ENCODE measurements at regions of chr12 and their contacts with region 1.

Region 1: DNA sequence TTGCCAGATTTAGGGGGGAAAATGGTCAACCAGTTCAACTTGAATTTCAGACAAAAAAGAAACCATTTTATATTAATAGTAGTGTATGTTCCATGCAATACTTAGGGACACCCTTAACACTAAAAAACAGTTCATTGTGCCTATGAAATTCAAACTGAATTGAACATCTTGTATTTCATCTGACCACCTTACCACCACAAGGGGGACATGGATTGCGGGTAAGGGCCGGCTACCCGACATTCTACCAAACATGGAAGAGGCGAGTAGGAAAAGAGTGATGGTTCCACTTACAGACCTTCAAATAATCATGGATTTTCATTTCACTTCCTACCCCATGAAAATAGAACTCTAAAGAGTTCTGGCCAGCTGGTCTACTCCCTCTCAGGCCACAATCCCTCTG is 10.3 kb upstream of the STK38L start:
- DNase-seq: no peak
- H3K4me3 ChIP-seq: no peak overlapping the region
- H3K27ac ChIP-seq: no peak overlapping the region
- H3K4me1 ChIP-seq: peaks cover 0 to 8% (median 0%) of the 10 kb centered on the region in 4 donors
- H3K27me3 ChIP-seq: no peaks in the 10 kb centered on the region
- CTCF ChIP-seq: no peak

Region 2: GRCh38 chr12:27083861-27084394 is 149.9 kb before region 1 on chr12:
- intact Hi-C with region 1: no loop called
- DNase-seq: peak in 1 of 2 donors; percentile 25
- H3K4me3 ChIP-seq: no peak overlapping the region
- H3K27ac ChIP-seq: peak overlapping the region in 1 of 2 donors; percentile 46
- H3K4me1 ChIP-seq: peaks cover 0 to 48% (median 14%) of the 10 kb centered on the region in 4 donors
- H3K27me3 ChIP-seq: no peaks in the 10 kb centered on the region
- CTCF ChIP-seq: no peak

Region 3: GRCh38 chr12:27207615-27208413 is 26.0 kb before region 1 on chr12:
- intact Hi-C with region 1: loop called (anchors 2 kb)
- DNase-seq: no peak
- H3K4me3 ChIP-seq: no peak overlapping the region
- H3K27ac ChIP-seq: no peak overlapping the region
- H3K4me1 ChIP-seq: no peaks in the 10 kb centered on the region
- H3K27me3 ChIP-seq: no peaks in the 10 kb centered on the region
- CTCF ChIP-seq: no peak

Region 4: DNA sequence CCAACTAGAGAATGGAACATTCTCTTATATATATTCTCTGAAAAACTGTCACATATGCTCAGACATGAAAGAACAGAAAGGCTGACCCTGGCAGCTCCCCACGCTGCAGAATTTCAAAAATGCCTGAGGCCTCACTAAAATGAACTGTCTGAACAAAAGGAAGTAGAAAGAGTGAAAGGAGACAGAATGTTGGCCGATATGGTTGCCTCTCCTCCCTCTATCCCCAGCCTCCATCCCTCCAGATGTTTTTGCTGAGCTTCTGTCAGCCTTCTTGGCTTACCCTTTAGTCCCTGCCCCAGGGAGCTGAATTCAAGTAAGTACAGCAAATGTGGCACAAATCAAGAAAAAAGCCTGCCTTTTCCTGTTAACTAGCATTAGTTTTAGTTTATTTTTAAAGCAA is 219.6 kb after region 1 on chr12:
- intact Hi-C with region 1: no loop called
- DNase-seq: no peak
- H3K4me3 ChIP-seq: no peak overlapping the region
- H3K27ac ChIP-seq: no peak overlapping the region
- H3K4me1 ChIP-seq: no peaks in the 10 kb centered on the region
- H3K27me3 ChIP-seq: no peaks in the 10 kb centered on the region
- CTCF ChIP-seq: no peak